Panc1 (cell line): ENCODE measurements at regions of chr3 and their contacts with region 1.

Region 1: GRCh38 chr3:194682694-194683310 is 2.9 kb upstream of the FAM43A start:
- DNase-seq: peak; percentile 91
- ATAC-seq: peak; percentile 74
- H3K4me3 ChIP-seq: peak overlapping the region in 1 of 2 experiments; percentile 15; a peak in 1 of 4 replicates
- H3K27ac ChIP-seq: peak overlapping the region; percentile 39
- H3K4me1 ChIP-seq: peaks cover 21% of the 10 kb centered on the region
- H3K27me3 ChIP-seq: no peaks in the 10 kb centered on the region
- CTCF ChIP-seq: peak; percentile 95

Region 2: GRCh38 chr3:194810076-194810475 is 127.3 kb after region 1 on chr3:
- CTCF ChIA-PET with region 1: no interaction called
- POLR2A ChIA-PET with region 1: interaction called, 10 read pairs
- in situ Hi-C with region 1: no loop called
- intact Hi-C with region 1: no loop called
- DNase-seq: no peak
- ATAC-seq: no peak
- H3K4me3 ChIP-seq: no peak overlapping the region
- H3K27ac ChIP-seq: no peak overlapping the region
- H3K4me1 ChIP-seq: no peaks in the 10 kb centered on the region
- H3K27me3 ChIP-seq: no peaks in the 10 kb centered on the region
- CTCF ChIP-seq: no peak

Region 3: GRCh38 chr3:195035345-195036190 is 352.8 kb after region 1 on chr3:
- CTCF ChIA-PET with region 1: no interaction called
- POLR2A ChIA-PET with region 1: no interaction called
- in situ Hi-C with region 1: no loop called
- intact Hi-C with region 1: loop called (anchors 10 kb)
- DNase-seq: no peak
- ATAC-seq: peak; percentile 40
- H3K4me3 ChIP-seq: no peak overlapping the region
- H3K27ac ChIP-seq: peak overlapping the region; percentile 89
- H3K4me1 ChIP-seq: peaks cover 63% of the 10 kb centered on the region
- H3K27me3 ChIP-seq: no peaks in the 10 kb centered on the region
- CTCF ChIP-seq: no peak; the same call in 1 of the 2 replicates

Region 4: GRCh38 chr3:195259475-195260279 is 576.9 kb after region 1 on chr3:
- CTCF ChIA-PET with region 1: interaction called, 8 read pairs
- POLR2A ChIA-PET with region 1: interaction called, 6 read pairs
- in situ Hi-C with region 1: no loop called
- intact Hi-C with region 1: loop called (anchors 1 kb)
- DNase-seq: no peak
- ATAC-seq: peak; percentile 77
- H3K4me3 ChIP-seq: peak overlapping the region; percentile 52 to 71
- H3K27ac ChIP-seq: peak overlapping the region; percentile 87
- H3K4me1 ChIP-seq: peaks cover 22% of the 10 kb centered on the region
- H3K27me3 ChIP-seq: no peaks in the 10 kb centered on the region
- CTCF ChIP-seq: peak; percentile 100

Region 5: GRCh38 chr3:195522254-195523023 is 839.6 kb after region 1 on chr3:
- CTCF ChIA-PET with region 1: no interaction called
- POLR2A ChIA-PET with region 1: no interaction called
- in situ Hi-C with region 1: no loop called
- intact Hi-C with region 1: loop called (anchors 10 kb)
- DNase-seq: no peak
- ATAC-seq: no peak
- H3K4me3 ChIP-seq: no peak overlapping the region
- H3K27ac ChIP-seq: no peak overlapping the region
- H3K4me1 ChIP-seq: no peaks in the 10 kb centered on the region
- H3K27me3 ChIP-seq: no peaks in the 10 kb centered on the region
- CTCF ChIP-seq: peak; percentile 76; the same call in 1 of the 2 replicates